Activated CD8-positive, alpha-beta T cell treated with anti-CD3 and anti-CD28 coated beads, Interleukin-2, amount 10 ng/mL, durations not matched to agents 7 days and 5 days (primary cell): ENCODE measurements at regions of chrX and their contacts with region 1.

Region 1: DNA sequence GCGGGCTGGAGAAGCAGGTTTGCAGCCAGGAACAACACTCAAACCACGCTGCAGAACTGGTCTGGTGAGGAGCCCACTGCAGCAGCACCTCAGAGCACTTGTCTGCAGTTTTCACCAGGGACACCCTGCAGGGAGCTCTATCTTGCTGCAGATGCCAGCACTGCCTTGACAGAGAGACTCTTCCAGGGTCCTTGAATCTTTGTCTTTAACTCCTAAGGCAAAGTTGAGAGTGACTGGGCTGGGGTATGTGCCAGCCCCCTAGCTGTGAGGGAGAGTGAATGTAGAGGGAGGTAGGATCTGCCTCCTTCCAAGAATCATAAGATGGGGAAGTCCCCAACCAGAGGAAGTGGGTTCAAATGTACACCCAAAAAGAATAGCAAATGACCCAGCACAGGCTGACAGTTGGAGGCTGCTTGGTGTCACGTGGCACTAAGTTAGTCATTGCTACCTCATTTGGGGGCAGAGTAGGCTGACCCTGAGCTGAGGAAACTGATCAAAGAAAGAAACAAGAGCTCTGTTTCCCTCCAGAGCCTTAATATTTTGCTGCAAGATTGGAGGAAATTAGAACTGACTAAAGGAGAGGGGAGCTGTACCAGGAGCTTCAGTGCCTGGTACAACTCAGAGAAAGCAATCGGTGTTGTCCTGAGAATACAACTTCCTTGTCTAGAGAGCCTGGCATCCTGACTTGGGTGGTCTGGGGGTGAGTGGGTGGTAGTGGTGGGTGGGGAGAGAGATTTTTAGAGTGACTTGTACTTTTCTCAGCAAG is 28.2 kb upstream of the HUWE1 start:
- DNase-seq: peak; percentile 82
- ATAC-seq: peak; percentile 87
- H3K4me3 Mint-ChIP-seq: peak overlapping the region; percentile 79
- H3K27ac Mint-ChIP-seq: peak overlapping the region; percentile 99
- H3K4me1 Mint-ChIP-seq: peaks cover 49% of the 10 kb centered on the region
- H3K27me3 Mint-ChIP-seq: no peaks in the 10 kb centered on the region

Region 2: DNA sequence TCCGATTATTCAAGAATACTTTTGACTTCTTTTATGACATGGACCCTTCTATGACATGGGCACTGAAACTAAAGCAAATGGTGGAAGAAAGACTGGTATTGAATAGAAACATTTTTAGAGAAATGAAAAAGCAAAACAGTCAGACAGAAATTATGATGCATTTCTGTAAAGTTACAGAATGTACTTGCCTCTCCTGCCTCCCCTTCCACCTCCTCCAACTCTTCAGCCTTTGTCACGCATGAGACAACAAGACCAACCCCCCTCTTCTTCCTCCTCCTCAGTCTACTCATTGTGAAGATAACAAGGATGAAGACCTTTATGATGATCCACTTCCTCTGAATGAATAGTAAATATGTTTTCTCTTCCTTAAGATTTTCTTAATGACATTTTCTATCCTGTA is 18.0 kb after region 1 on chrX:
- CTCF ChIA-PET with region 1: interaction called, 5 read pairs
- POLR2A ChIA-PET with region 1: interaction called, 24 read pairs
- DNase-seq: no peak
- ATAC-seq: no peak
- H3K4me3 Mint-ChIP-seq: no peak overlapping the region
- H3K27ac Mint-ChIP-seq: peak overlapping the region; percentile 61
- H3K4me1 Mint-ChIP-seq: peaks cover 26% of the 10 kb centered on the region
- H3K27me3 Mint-ChIP-seq: no peaks in the 10 kb centered on the region